ENCODE measurements at regions of chr4 and their contacts with region 1.

Region 1: DNA sequence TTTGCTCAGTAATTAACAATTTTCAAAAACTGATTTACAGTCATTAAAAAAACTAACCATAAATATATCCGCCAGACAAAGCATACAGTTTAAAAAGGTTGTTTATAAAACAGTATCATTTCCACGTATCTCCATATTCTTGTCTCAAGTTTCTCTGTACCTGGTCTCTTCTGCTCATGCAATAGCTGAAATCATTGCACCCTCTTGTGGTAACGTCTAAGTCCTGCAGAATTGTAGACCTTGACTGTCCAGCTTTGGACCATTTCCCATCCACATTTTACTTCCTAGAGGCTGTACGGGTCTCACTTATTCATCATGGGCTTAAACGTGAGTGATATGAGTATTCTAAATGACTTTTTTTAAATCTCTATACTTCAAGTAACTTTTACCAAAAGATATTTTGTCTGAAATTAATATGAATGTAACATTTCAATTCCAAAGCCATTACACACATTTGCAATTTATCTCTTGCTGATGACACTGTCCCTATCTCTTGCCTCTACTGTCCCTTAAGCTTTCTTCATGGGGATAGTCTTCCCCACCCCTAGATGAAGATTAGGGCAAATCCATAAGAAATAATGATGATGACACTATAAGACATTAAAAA is 118.5 kb downstream of the BTC start:
- DNase-seq: no peak
- H3K4me3 Mint-ChIP-seq: no peak overlapping the region
- H3K27ac Mint-ChIP-seq: no peak overlapping the region
- H3K4me1 Mint-ChIP-seq: no peaks in the 10 kb centered on the region
- H3K27me3 Mint-ChIP-seq: peaks cover 3% of the 10 kb centered on the region

Region 2: DNA sequence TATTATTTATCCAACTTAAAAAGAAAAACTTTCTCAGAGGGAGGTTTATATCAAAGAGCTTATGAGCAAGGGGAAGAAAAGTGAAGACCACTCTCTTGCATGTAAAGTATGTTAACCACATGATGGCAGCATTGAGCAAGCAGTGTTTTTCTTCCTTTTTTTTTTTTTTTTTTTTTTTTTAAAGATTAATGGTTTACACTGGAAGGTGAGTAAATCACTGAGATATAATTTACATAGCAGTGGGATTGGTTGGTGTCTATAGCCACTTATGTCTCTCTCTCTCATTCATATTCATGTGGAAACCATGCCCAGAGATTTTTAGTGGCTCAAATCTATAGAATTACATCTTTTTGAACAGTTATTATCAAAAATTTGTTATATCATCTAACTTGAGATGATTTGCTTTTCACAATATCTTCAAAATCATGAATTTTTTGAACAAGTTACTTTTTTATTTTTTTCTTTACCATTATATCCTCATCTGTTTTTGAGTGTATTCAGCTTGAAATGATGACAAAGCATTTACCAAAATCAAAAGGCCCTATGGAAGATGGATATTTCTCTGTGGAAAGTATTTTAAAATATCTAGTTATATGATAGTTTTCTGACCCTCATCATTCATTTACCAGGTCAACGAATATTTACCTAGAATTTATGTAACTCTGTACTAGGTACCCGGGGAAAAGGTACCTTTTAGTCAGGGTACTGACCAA is 486.3 kb before region 1 on chr4:
- intact Hi-C with region 1: loop called (anchors 5 kb)
- DNase-seq: no peak
- H3K4me3 Mint-ChIP-seq: no peak overlapping the region
- H3K27ac Mint-ChIP-seq: no peak overlapping the region
- H3K4me1 Mint-ChIP-seq: no peaks in the 10 kb centered on the region
- H3K27me3 Mint-ChIP-seq: peaks cover 2% of the 10 kb centered on the region

Region 3: GRCh38 chr4:74228691-74229640 is 446.8 kb before region 1 on chr4:
- intact Hi-C with region 1: loop called (anchors 2 kb)
- DNase-seq: peak; percentile 47
- H3K4me3 Mint-ChIP-seq: no peak overlapping the region
- H3K27ac Mint-ChIP-seq: no peak overlapping the region
- H3K4me1 Mint-ChIP-seq: peaks cover 20% of the 10 kb centered on the region
- H3K27me3 Mint-ChIP-seq: peaks cover 4% of the 10 kb centered on the region

Region 4: GRCh38 chr4:74320559-74321118 is 355.1 kb before region 1 on chr4:
- intact Hi-C with region 1: loop called (anchors 1 kb)
- DNase-seq: no peak
- H3K4me3 Mint-ChIP-seq: no peak overlapping the region
- H3K27ac Mint-ChIP-seq: no peak overlapping the region
- H3K4me1 Mint-ChIP-seq: no peaks in the 10 kb centered on the region
- H3K27me3 Mint-ChIP-seq: peaks cover 14% of the 10 kb centered on the region

Region 5: DNA sequence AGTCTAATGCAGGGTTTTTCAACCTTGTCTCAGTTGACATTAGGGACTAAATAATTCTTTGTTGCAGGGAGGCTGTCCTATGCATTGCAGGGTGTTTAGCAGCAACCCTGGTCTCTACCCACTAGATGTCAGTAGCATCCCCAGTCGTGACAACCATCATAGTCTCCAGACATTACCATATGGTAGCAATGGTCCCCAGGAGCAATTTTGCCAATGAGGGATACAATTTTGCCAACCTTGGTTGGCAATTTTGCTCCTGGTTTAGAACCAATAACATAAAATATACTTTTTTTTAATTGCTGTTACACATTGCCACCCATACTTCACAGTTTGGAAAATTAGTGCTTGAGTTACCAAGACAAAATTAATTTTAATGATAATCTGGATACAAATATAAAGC is 304.9 kb before region 1 on chr4:
- intact Hi-C with region 1: loop called (anchors 1 kb)
- DNase-seq: peak; percentile 1
- H3K4me3 Mint-ChIP-seq: no peak overlapping the region
- H3K27ac Mint-ChIP-seq: no peak overlapping the region
- H3K4me1 Mint-ChIP-seq: peaks cover 5% of the 10 kb centered on the region
- H3K27me3 Mint-ChIP-seq: peaks cover 17% of the 10 kb centered on the region

Region 6: DNA sequence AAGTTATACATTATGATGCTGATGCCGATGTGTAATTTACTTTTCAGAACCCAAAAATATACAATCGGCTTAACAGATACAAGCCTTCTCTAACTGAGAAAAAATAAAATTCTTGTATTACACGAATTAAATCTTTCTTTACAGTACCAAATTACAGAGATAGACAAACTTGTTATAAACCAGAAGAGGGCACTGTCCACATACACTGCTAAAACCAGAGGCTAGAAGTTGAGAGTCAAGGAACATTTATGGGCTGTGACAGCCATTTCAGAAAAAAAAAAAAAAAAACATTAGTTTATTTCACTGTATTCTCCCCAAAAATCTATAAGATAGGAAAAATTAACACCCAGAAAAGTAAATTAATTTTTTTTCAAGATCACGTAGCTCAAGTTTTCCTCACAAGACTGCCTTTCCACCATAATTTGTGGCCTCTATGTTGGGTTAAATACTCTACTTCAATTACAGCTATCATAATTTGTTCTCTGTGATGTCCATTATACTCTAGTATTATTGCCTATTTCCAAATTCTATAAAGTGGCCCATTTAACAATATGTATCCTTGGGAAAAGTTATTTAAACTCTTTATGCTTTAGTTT is 298.8 kb before region 1 on chr4:
- intact Hi-C with region 1: loop called (anchors 2 kb)
- DNase-seq: no peak
- H3K4me3 Mint-ChIP-seq: no peak overlapping the region
- H3K27ac Mint-ChIP-seq: no peak overlapping the region
- H3K4me1 Mint-ChIP-seq: peaks cover 5% of the 10 kb centered on the region
- H3K27me3 Mint-ChIP-seq: peaks cover 2% of the 10 kb centered on the region

Region 7: GRCh38 chr4:74531963-74532794 is 143.6 kb before region 1 on chr4:
- intact Hi-C with region 1: loop called (anchors 5 kb)
- DNase-seq: no peak
- H3K4me3 Mint-ChIP-seq: no peak overlapping the region
- H3K27ac Mint-ChIP-seq: no peak overlapping the region
- H3K4me1 Mint-ChIP-seq: no peaks in the 10 kb centered on the region
- H3K27me3 Mint-ChIP-seq: peaks cover under 1% of the 10 kb centered on the region